ENCODE measurements at regions of chr18 and their contacts with region 1.

Region 1: DNA sequence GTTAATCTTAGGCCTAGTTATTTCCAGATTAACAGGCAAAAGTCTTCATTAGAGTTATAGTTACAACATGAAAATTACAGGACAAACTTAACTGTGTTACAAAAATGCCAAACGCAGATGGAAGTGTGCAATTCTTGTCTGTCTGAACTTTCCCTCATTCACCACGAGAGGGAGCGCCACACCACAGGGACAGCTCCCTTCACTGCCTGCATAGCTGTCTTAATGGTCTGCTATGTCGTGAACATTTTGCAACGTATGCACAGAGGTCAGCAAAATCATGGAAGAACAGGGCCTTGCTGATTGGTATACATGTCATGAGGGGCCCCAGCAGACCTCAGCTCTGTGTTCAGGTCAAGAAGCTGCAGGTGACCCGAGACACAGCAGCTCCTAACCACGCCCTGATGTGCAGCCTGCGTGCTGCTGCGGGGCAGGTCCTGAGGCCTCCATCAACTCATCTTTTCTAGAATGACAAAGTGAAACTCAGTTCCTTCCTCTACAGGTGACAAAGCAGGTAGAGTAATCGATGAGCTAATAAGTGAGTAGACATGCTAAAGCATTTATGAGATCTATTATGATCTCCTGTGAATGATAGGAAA is 78.8 kb upstream of the ATP8B1 start:
- DNase-seq: peak; percentile 75
- ATAC-seq: peak; percentile 98
- H3K4me3 ChIP-seq: peak overlapping the region; percentile 48 to 67 (median 51); a peak in 5 of 6 replicates
- H3K27ac ChIP-seq: no peak overlapping the region
- H3K4me1 ChIP-seq: peaks cover 22% of the 10 kb centered on the region
- H3K27me3 ChIP-seq: 0 out of 5 replicates have a peak, but pooled peaks cover 0 to 4% of the 10 kb centered on the region in 2 experiments
- CTCF ChIP-seq: peak; percentile 98
- EP300 ChIP-seq: no peak
- POLR2A ChIP-seq: no peak
- RAD21 ChIP-seq: peak; percentile 92

Region 2: GRCh38 chr18:57666818-57667497 is 215.0 kb before region 1 on chr18:
- CTCF ChIA-PET with region 1: no interaction called
- POLR2A ChIA-PET with region 1: no interaction called
- in situ Hi-C with region 1: no loop called
- intact Hi-C with region 1: no loop called
- DNase-seq: no peak
- ATAC-seq: no peak
- H3K4me3 ChIP-seq: no peak overlapping the region
- H3K27ac ChIP-seq: no peak overlapping the region
- H3K4me1 ChIP-seq: no peaks in the 10 kb centered on the region
- H3K27me3 ChIP-seq: no peaks in the 10 kb centered on the region
- CTCF ChIP-seq: no peak
- EP300 ChIP-seq: no peak
- POLR2A ChIP-seq: no peak
- RAD21 ChIP-seq: no peak

Region 3: GRCh38 chr18:57959278-57959677 is 77.4 kb after region 1 on chr18:
- CTCF ChIA-PET with region 1: no interaction called
- POLR2A ChIA-PET with region 1: no interaction called
- in situ Hi-C with region 1: no loop called
- intact Hi-C with region 1: loop called (anchors 5 kb)
- DNase-seq: peak; percentile 66
- ATAC-seq: peak; percentile 96
- H3K4me3 ChIP-seq: no peak overlapping the region; a peak in 1 of 6 replicates
- H3K27ac ChIP-seq: no peak overlapping the region
- H3K4me1 ChIP-seq: peaks cover 30% of the 10 kb centered on the region
- H3K27me3 ChIP-seq: no peaks in the 10 kb centered on the region
- CTCF ChIP-seq: peak; percentile 83
- EP300 ChIP-seq: no peak
- POLR2A ChIP-seq: no peak
- RAD21 ChIP-seq: peak; percentile 62; the same call in 1 of the 2 replicates

Region 4: GRCh38 chr18:58135701-58136331 is 253.9 kb after region 1 on chr18:
- CTCF ChIA-PET with region 1: interaction called, 4 read pairs
- POLR2A ChIA-PET with region 1: no interaction called
- in situ Hi-C with region 1: no loop called
- intact Hi-C with region 1: loop called (anchors 5 kb)
- DNase-seq: peak; percentile 31
- ATAC-seq: peak; percentile 51
- H3K4me3 ChIP-seq: no peak overlapping the region
- H3K27ac ChIP-seq: no peak overlapping the region
- H3K4me1 ChIP-seq: peaks cover 78% of the 10 kb centered on the region
- H3K27me3 ChIP-seq: no peaks in the 10 kb centered on the region
- CTCF ChIP-seq: peak; percentile 56
- EP300 ChIP-seq: no peak
- POLR2A ChIP-seq: no peak
- RAD21 ChIP-seq: no peak

Region 5: GRCh38 chr18:58314284-58314683 is 432.4 kb after region 1 on chr18:
- CTCF ChIA-PET with region 1: no interaction called
- POLR2A ChIA-PET with region 1: no interaction called
- in situ Hi-C with region 1: no loop called
- intact Hi-C with region 1: loop called (anchors 10 kb)
- DNase-seq: peak; percentile 65
- ATAC-seq: peak; percentile 39; the same call in 2 of the 3 replicates
- H3K4me3 ChIP-seq: no peak overlapping the region
- H3K27ac ChIP-seq: peak overlapping the region; percentile 78
- H3K4me1 ChIP-seq: peaks cover 83% of the 10 kb centered on the region
- H3K27me3 ChIP-seq: no peaks in the 10 kb centered on the region; a peak in 1 of 5 replicates
- CTCF ChIP-seq: no peak
- EP300 ChIP-seq: no peak
- POLR2A ChIP-seq: no peak
- RAD21 ChIP-seq: no peak

Region 6: GRCh38 chr18:58493516-58494253 is 611.8 kb after region 1 on chr18:
- CTCF ChIA-PET with region 1: interaction called, 3 read pairs
- POLR2A ChIA-PET with region 1: no interaction called
- in situ Hi-C with region 1: loop called (anchors 5 kb)
- intact Hi-C with region 1: loop called (anchors 5 kb)
- DNase-seq: peak; percentile 76
- ATAC-seq: peak; percentile 89
- H3K4me3 ChIP-seq: no peak overlapping the region
- H3K27ac ChIP-seq: peak overlapping the region; percentile 63
- H3K4me1 ChIP-seq: peaks cover 98% of the 10 kb centered on the region
- H3K27me3 ChIP-seq: no peaks in the 10 kb centered on the region
- CTCF ChIP-seq: peak; percentile 91
- EP300 ChIP-seq: peak in 1 of 2 experiments; percentile 47; a peak in 1 of 4 replicates
- POLR2A ChIP-seq: no peak
- RAD21 ChIP-seq: peak; percentile 94

Region 7: GRCh38 chr18:59079264-59079972 is 1197.5 kb after region 1 on chr18:
- CTCF ChIA-PET with region 1: no interaction called
- POLR2A ChIA-PET with region 1: no interaction called
- in situ Hi-C with region 1: no loop called
- intact Hi-C with region 1: loop called (anchors 5 kb)
- DNase-seq: no peak
- ATAC-seq: no peak
- H3K4me3 ChIP-seq: no peak overlapping the region
- H3K27ac ChIP-seq: no peak overlapping the region
- H3K4me1 ChIP-seq: no peaks in the 10 kb centered on the region
- H3K27me3 ChIP-seq: peaks cover 0 to 9% of the 10 kb centered on the region in 2 experiments; a peak in 4 of 5 replicates
- CTCF ChIP-seq: no peak
- EP300 ChIP-seq: no peak
- POLR2A ChIP-seq: no peak
- RAD21 ChIP-seq: no peak